ENCODE measurements at regions of chr5 and their contacts with region 1.

Region 1: DNA sequence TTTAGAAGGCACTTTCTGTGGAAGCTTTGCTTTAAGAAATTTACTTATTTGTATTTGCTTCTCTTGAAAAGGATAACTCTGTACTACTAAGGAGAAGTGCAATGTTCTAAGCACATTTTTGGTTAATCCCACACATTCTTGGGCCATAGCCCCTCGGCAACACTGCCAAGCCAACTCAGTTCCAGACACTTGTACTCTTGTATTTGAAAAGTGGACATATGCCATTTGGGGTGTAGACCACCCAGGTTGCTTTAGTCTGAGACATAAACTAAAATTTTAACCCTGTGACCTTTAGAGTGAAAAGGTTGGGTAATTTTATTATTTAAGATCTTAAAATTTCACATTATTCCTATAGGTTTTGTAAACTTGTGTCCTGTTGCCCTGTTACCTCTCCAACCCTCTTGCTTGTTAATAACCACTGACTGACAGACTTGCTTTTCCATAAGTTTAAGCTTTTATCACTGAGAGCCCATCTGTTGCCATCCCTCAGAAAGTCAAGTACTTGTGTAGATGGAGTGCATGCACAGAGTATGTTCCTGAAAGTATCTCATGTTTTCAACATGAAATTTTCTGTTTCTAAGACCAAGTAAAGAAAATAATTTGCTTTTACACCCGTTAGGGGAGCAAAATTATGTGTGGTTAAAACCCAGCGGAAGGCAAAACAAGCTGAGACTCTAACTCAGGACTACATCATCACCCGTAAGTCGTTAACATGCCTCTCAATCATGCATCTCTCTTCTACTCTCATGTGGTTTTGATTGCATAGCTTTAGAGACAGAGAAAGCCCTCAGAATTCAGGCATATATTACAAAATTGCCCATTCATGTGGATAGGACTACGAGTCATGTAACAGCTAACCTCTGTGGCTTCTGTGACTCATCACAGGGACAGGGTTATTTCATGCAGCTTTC is 117.3 kb downstream of the GDNF start:
- DNase-seq: no peak
- ATAC-seq: no peak
- H3K4me3 Mint-ChIP-seq: no peak overlapping the region
- H3K27ac Mint-ChIP-seq: no peak overlapping the region
- H3K4me1 Mint-ChIP-seq: peaks cover 25% of the 10 kb centered on the region
- H3K27me3 Mint-ChIP-seq: no peaks in the 10 kb centered on the region
- CTCF ChIP-seq: no peak

Region 2: GRCh38 chr5:37685213-37685612 is 37.3 kb before region 1 on chr5:
- CTCF ChIA-PET with region 1: no interaction called
- POLR2A ChIA-PET with region 1: no interaction called
- DNase-seq: no peak
- ATAC-seq: no peak
- H3K4me3 Mint-ChIP-seq: no peak overlapping the region
- H3K27ac Mint-ChIP-seq: no peak overlapping the region
- H3K4me1 Mint-ChIP-seq: peaks cover 5% of the 10 kb centered on the region; the same call in 1 of the 2 replicates
- H3K27me3 Mint-ChIP-seq: no peaks in the 10 kb centered on the region
- CTCF ChIP-seq: no peak

Region 3: DNA sequence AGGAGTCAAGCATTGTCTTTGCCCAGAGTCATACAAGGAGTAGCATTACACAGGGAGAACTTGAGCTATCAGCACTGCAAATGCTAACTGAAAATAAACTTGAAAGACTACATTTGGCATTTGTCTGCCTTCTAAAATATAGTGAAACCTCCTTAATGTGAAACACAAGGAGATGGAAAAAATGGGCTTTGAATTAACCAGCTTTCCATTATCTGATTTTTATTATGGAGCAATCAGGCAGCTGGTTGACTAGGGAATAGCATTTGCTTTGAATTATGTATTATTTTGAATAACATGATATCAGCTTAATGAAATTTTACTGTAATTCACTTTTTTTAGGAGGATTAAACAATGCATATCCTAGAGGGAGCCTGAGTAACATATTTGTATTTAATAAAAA is 13.5 kb before region 1 on chr5:
- CTCF ChIA-PET with region 1: interaction called, 12 read pairs
- POLR2A ChIA-PET with region 1: no interaction called
- DNase-seq: no peak
- ATAC-seq: no peak
- H3K4me3 Mint-ChIP-seq: no peak overlapping the region
- H3K27ac Mint-ChIP-seq: no peak overlapping the region
- H3K4me1 Mint-ChIP-seq: no peaks in the 10 kb centered on the region
- H3K27me3 Mint-ChIP-seq: no peaks in the 10 kb centered on the region
- CTCF ChIP-seq: no peak

Region 4: GRCh38 chr5:37738057-37738691 is 15.7 kb after region 1 on chr5:
- CTCF ChIA-PET with region 1: interaction called, 23 read pairs
- POLR2A ChIA-PET with region 1: no interaction called
- DNase-seq: no peak
- ATAC-seq: no peak
- H3K4me3 Mint-ChIP-seq: no peak overlapping the region
- H3K27ac Mint-ChIP-seq: no peak overlapping the region
- H3K4me1 Mint-ChIP-seq: no peaks in the 10 kb centered on the region
- H3K27me3 Mint-ChIP-seq: no peaks in the 10 kb centered on the region
- CTCF ChIP-seq: no peak